Right lobe of liver (tissue), 6 donors: ENCODE measurements at regions of chr6 and their contacts with region 1.

Region 1: DNA sequence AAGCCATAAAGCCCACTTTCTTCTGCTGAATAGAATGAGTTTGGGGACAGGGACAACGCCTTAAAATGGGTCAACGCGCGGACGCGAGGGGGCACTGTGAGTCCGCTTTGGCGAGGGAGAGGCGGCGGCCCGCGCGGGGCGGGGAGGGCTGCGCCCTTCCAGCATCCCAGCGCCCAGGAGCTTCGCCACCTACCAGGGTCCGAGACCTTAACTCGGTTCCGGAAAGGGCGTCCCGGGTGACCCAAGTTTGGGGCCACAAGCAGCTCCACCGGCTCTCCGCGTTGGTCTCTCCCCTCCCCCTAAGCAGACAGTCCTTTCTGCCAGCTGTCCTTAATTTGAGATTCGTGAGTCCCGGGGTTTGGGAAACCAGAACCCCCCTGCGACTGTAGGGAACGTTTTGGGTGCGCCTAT is 1.8 kb upstream of the SAMD5 start:
- DNase-seq: peak; percentile 79 to 84 (median 81)
- ATAC-seq: peak; percentile 49 to 71 (median 70)
- H3K4me3 ChIP-seq: peak overlapping the region; percentile 59 to 75 (median 62)
- H3K27ac ChIP-seq: peak overlapping the region in 1 of 3 donors; percentile 64
- H3K4me1 ChIP-seq: peaks cover 0 to 11% (median 5%) of the 10 kb centered on the region in 4 donors
- H3K27me3 ChIP-seq: no peaks in the 10 kb centered on the region
- CTCF ChIP-seq: peak; percentile 78 to 91 (median 84)
- POLR2A ChIP-seq: no peak

Region 2: GRCh38 chr6:147298461-147298860 is 208.2 kb before region 1 on chr6:
- intact Hi-C with region 1: no loop called
- DNase-seq: no peak
- ATAC-seq: peak in 1 of 4 donors; percentile 59
- H3K4me3 ChIP-seq: no peak overlapping the region
- H3K27ac ChIP-seq: no peak overlapping the region
- H3K4me1 ChIP-seq: no peaks in the 10 kb centered on the region
- H3K27me3 ChIP-seq: no peaks in the 10 kb centered on the region
- CTCF ChIP-seq: no peak
- POLR2A ChIP-seq: no peak

Region 3: GRCh38 chr6:148166339-148166968 is 659.7 kb after region 1 on chr6:
- intact Hi-C with region 1: loop called (anchors 5 kb)
- DNase-seq: no peak
- ATAC-seq: peak; percentile 68 to 77 (median 76)
- H3K4me3 ChIP-seq: no peak overlapping the region
- H3K27ac ChIP-seq: no peak overlapping the region
- H3K4me1 ChIP-seq: no peaks in the 10 kb centered on the region
- H3K27me3 ChIP-seq: no peaks in the 10 kb centered on the region
- CTCF ChIP-seq: peak; percentile 64 to 75 (median 68)
- POLR2A ChIP-seq: no peak